Esophagus muscularis mucosa (tissue), 4 donors: ENCODE measurements at regions of chr15 and their contacts with region 1.

Region 1: DNA sequence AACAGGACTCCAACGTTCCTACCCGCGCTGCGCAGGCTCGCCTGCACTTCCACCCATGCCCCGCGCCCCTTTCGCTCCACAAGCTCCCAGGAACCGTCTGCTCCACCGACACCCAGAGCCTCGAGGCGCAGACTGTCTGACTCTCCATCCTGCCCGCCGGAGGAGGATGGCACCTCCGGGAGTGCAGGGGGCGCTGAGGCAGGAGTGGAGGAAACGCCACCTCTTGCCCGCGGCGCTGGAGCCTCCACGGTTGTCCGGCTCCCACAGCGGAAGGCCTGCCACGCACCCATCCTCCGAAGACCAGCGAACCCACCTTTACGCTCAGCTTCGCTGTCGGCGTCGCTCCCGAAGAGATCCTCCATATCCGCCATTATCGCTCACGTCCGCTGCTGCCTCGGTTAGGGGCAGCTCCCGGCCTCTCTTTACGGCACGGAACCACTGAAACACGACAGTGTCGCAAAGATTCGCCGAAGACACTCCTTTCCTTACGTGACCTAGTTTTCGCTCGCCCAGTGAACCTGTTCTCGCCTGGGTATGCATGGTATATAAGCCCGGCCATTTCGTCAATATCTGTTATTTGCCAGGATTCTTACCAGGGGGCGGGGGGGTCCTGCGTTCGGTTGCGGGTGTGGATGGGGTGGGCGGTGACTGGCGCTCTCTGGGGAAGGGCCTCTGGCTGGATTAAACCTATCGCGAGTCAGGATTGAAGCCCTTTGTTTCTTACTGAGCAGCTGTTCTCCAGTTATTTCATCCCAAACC is at the start of gene LEO1:
- DNase-seq: peak; percentile 95
- H3K4me3 ChIP-seq: peak within 1 kb of the TSS; percentile 66 to 79 (median 72)
- H3K27ac ChIP-seq: peak within 1 kb of the TSS; percentile 85 to 89 (median 88)
- H3K4me1 ChIP-seq: peaks cover 18 to 27% (median 20%) of the 10 kb centered on the region in 4 donors
- H3K27me3 ChIP-seq: no peaks in the 10 kb centered on the region
- CTCF ChIP-seq: peak; percentile 47 to 49 (median 47)
- EP300 ChIP-seq: no peak
- POLR2A ChIP-seq: no peak
- total RNA-seq, gene LEO1: 7.9 to 14.1 (median 10.5) TPM

Region 2: GRCh38 chr15:51816611-51817010 is 154.9 kb before region 1 on chr15:
- intact Hi-C with region 1: no loop called
- DNase-seq: no peak
- H3K4me3 ChIP-seq: no peak overlapping the region
- H3K27ac ChIP-seq: no peak overlapping the region
- H3K4me1 ChIP-seq: no peaks in the 10 kb centered on the region
- H3K27me3 ChIP-seq: no peaks in the 10 kb centered on the region
- CTCF ChIP-seq: no peak
- EP300 ChIP-seq: no peak
- POLR2A ChIP-seq: no peak

Region 3: GRCh38 chr15:52019388-52020220 is 48.0 kb after region 1 on chr15:
- intact Hi-C with region 1: loop called (anchors 5 kb)
- DNase-seq: peak; percentile 94
- H3K4me3 ChIP-seq: peak overlapping the region; percentile 63 to 88 (median 74)
- H3K27ac ChIP-seq: peak overlapping the region; percentile 94 to 96 (median 95)
- H3K4me1 ChIP-seq: peaks cover 34 to 44% (median 39%) of the 10 kb centered on the region in 4 donors
- H3K27me3 ChIP-seq: no peaks in the 10 kb centered on the region
- CTCF ChIP-seq: peak in 1 of 3 experiments; percentile 8
- EP300 ChIP-seq: no peak
- POLR2A ChIP-seq: peak; percentile 47

Region 4: GRCh38 chr15:52078876-52079700 is 107.5 kb after region 1 on chr15:
- intact Hi-C with region 1: loop called (anchors 5 kb)
- DNase-seq: no peak
- H3K4me3 ChIP-seq: peak overlapping the region in 1 of 4 donors; percentile 10
- H3K27ac ChIP-seq: no peak overlapping the region
- H3K4me1 ChIP-seq: peaks cover 0 to 6% (median 1%) of the 10 kb centered on the region in 4 donors
- H3K27me3 ChIP-seq: peaks cover 0 to 4% (median 0%) of the 10 kb centered on the region in 4 donors
- CTCF ChIP-seq: peak; percentile 76 to 85 (median 83)
- EP300 ChIP-seq: no peak
- POLR2A ChIP-seq: no peak